ENCODE measurements at regions of chr6 and their contacts with region 1.

Region 1: GRCh38 chr6:37499433-37500293 is at the start of gene CCDC167:
- DNase-seq: peak; percentile 86 to 96 (median 90)
- ATAC-seq: peak; percentile 76
- H3K4me3 ChIP-seq: peak within 1 kb of the TSS; percentile 78
- H3K4me3 Mint-ChIP-seq: peak within 1 kb of the TSS; percentile 90 to 100 (median 98)
- H3K27ac ChIP-seq: peak within 1 kb of the TSS; percentile 91
- H3K27ac Mint-ChIP-seq: peak within 1 kb of the TSS; percentile 84 to 99 (median 95)
- H3K4me1 ChIP-seq: peaks cover 60 to 67% of the 10 kb centered on the region in 2 donors
- H3K4me1 Mint-ChIP-seq: peaks cover 60 to 93% (median 85%) of the 10 kb centered on the region in 7 donors
- H3K27me3 ChIP-seq: no peaks in the 10 kb centered on the region
- H3K27me3 Mint-ChIP-seq: no peaks in the 10 kb centered on the region
- total RNA-seq, gene CCDC167: 13.8 to 55.1 (median 18.0) TPM

Region 2: GRCh38 chr6:37207903-37208456 is 291.7 kb before region 1 on chr6:
- CTCF ChIA-PET with region 1: no interaction called
- POLR2A ChIA-PET with region 1: no interaction called
- intact Hi-C with region 1: no loop called
- DNase-seq: peak; percentile 67 to 85 (median 82)
- ATAC-seq: peak; percentile 87
- H3K4me3 ChIP-seq: no peak overlapping the region
- H3K4me3 Mint-ChIP-seq: peak overlapping the region; percentile 4 to 77 (median 68)
- H3K27ac ChIP-seq: peak overlapping the region; percentile 23
- H3K27ac Mint-ChIP-seq: peak overlapping the region; percentile 72 to 98 (median 91)
- H3K4me1 ChIP-seq: peaks cover 36 to 39% of the 10 kb centered on the region in 2 donors
- H3K4me1 Mint-ChIP-seq: peaks cover 36 to 69% (median 64%) of the 10 kb centered on the region in 7 donors
- H3K27me3 ChIP-seq: no peaks in the 10 kb centered on the region
- H3K27me3 Mint-ChIP-seq: no peaks in the 10 kb centered on the region

Region 3: GRCh38 chr6:37432916-37433656 is 66.6 kb before region 1 on chr6 and contains the start of gene CMTR1:
- CTCF ChIA-PET with region 1: no interaction called
- POLR2A ChIA-PET with region 1: interaction called, 3 read pairs
- intact Hi-C with region 1: loop called (anchors 1 to 5 kb)
- DNase-seq: peak; percentile 94 to 99 (median 95)
- ATAC-seq: peak; percentile 96
- H3K4me3 ChIP-seq: peak within 1 kb of the TSS; percentile 64
- H3K4me3 Mint-ChIP-seq: peak within 1 kb of the TSS; percentile 83 to 96 (median 94)
- H3K27ac ChIP-seq: peak within 1 kb of the TSS; percentile 94
- H3K27ac Mint-ChIP-seq: peak within 1 kb of the TSS; percentile 92 to 97 (median 96)
- H3K4me1 ChIP-seq: peaks cover 12 to 25% of the 10 kb centered on the region in 2 donors
- H3K4me1 Mint-ChIP-seq: peaks cover 24 to 55% (median 47%) of the 10 kb centered on the region in 7 donors
- H3K27me3 ChIP-seq: no peaks in the 10 kb centered on the region
- H3K27me3 Mint-ChIP-seq: peaks cover 2 to 9% (median 8%) of the 10 kb centered on the region in 5 donors
- total RNA-seq, gene CMTR1: 70.0 to 89.4 (median 71.8) TPM

Region 4: GRCh38 chr6:37473397-37474095 is 26.1 kb before region 1 on chr6:
- CTCF ChIA-PET with region 1: no interaction called
- POLR2A ChIA-PET with region 1: no interaction called
- intact Hi-C with region 1: no loop called
- DNase-seq: no peak
- ATAC-seq: no peak
- H3K4me3 ChIP-seq: no peak overlapping the region
- H3K4me3 Mint-ChIP-seq: no peak overlapping the region
- H3K27ac ChIP-seq: no peak overlapping the region
- H3K27ac Mint-ChIP-seq: peak overlapping the region in 3 of 9 donors; percentile 27 to 78 (median 48)
- H3K4me1 ChIP-seq: no peaks in the 10 kb centered on the region
- H3K4me1 Mint-ChIP-seq: peaks cover 0 to 4% (median 0%) of the 10 kb centered on the region in 7 donors
- H3K27me3 ChIP-seq: no peaks in the 10 kb centered on the region
- H3K27me3 Mint-ChIP-seq: no peaks in the 10 kb centered on the region

Region 5: DNA sequence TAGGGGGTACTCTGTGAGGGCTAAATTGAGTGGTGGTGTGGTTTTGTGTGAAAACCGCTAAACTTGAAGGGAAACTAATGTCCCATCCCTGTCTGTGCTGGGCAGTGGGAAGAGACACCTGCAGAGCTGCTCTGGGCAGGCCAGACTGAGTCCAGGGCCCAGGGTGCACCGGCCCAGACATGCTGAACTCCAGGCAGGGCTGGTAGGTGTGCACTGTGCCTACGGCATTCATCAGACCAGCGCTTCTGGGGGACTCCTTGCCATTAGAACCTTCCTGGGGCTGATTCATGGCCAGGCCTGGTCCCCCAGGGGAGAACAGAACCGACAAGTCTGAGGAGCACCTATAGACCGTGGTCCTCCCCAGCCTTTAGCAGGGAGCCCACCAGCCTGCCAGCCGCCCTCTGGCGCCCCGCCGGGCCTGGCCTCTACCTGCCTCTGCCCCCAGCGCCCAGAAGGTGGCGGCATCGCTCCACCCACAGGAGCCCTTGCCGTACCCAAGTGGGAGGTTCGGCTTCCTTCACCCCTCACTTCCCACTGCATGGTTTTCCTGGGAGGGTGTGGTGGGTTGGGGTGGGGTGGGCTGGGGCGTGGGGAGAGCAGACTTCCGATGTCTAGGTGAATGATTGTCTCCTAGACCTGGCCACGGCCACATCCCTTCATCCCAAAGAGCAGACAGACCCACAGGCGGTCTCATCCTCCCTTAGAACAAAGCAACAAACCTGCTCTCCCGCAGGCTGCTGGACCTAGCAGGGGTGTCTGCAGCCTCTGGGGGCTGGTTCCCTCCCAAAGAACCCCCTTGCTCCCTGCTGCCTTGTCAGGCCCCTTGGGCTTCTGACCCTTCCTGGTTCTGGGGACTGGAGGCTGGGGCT is 15.5 kb before region 1 on chr6:
- CTCF ChIA-PET with region 1: interaction called, 4 read pairs
- POLR2A ChIA-PET with region 1: interaction called, 4 read pairs
- intact Hi-C with region 1: loop called in 1 of 2 experiments (anchors 1 kb)
- DNase-seq: peak; percentile 56 to 85 (median 70)
- ATAC-seq: peak; percentile 85
- H3K4me3 ChIP-seq: no peak overlapping the region
- H3K4me3 Mint-ChIP-seq: no peak overlapping the region
- H3K27ac ChIP-seq: no peak overlapping the region
- H3K27ac Mint-ChIP-seq: peak overlapping the region in 2 of 9 donors; percentile 25 to 36
- H3K4me1 ChIP-seq: peaks cover 9 to 16% of the 10 kb centered on the region in 2 donors
- H3K4me1 Mint-ChIP-seq: peaks cover 13 to 35% (median 20%) of the 10 kb centered on the region in 7 donors
- H3K27me3 ChIP-seq: no peaks in the 10 kb centered on the region
- H3K27me3 Mint-ChIP-seq: no peaks in the 10 kb centered on the region

Region 6: DNA sequence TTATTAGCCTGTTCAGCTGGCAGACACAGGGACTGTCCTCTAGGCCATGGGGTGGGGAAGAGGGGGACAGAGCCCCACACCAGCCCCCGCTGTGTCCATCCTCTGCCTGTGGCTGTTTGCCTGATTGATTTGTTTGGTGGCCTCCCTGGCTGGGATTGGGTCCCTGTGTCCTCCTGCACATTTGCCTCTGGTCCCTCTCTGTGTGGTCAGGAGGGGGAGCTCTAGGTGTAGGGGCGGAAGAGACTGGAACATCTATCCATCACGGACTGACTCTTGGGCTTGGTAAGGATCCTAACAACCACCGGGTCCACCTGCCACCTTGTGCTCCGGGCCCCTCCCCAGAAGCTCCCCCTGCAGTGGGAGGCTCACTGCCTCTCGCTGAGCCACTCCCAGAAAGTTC is 38.4 kb after region 1 on chr6:
- CTCF ChIA-PET with region 1: interaction called, 4 read pairs
- POLR2A ChIA-PET with region 1: interaction called, 5 read pairs
- intact Hi-C with region 1: loop called in 1 of 2 experiments (anchors 5 kb)
- DNase-seq: no peak
- ATAC-seq: no peak
- H3K4me3 ChIP-seq: no peak overlapping the region
- H3K4me3 Mint-ChIP-seq: peak overlapping the region in 2 of 10 donors; percentile 19 to 27
- H3K27ac ChIP-seq: no peak overlapping the region
- H3K27ac Mint-ChIP-seq: peak overlapping the region in 5 of 9 donors; percentile 22 to 69 (median 46)
- H3K4me1 ChIP-seq: peaks cover 0 to 18% of the 10 kb centered on the region in 2 donors
- H3K4me1 Mint-ChIP-seq: peaks cover 3 to 36% (median 13%) of the 10 kb centered on the region in 7 donors
- H3K27me3 ChIP-seq: no peaks in the 10 kb centered on the region
- H3K27me3 Mint-ChIP-seq: peaks cover 0 to 48% (median 0%) of the 10 kb centered on the region in 5 donors

Region 7: GRCh38 chr6:37566111-37566949 is 66.7 kb after region 1 on chr6:
- CTCF ChIA-PET with region 1: interaction called, 9 read pairs
- POLR2A ChIA-PET with region 1: interaction called, 6 read pairs
- intact Hi-C with region 1: loop called in 1 of 2 experiments (anchors 1 kb)
- DNase-seq: peak; percentile 45 to 86 (median 70)
- ATAC-seq: peak; percentile 93
- H3K4me3 ChIP-seq: peak overlapping the region; percentile 52
- H3K4me3 Mint-ChIP-seq: peak overlapping the region in 9 of 10 donors; percentile 37 to 80 (median 63)
- H3K27ac ChIP-seq: no peak overlapping the region
- H3K27ac Mint-ChIP-seq: peak overlapping the region in 2 of 9 donors; percentile 8 to 12
- H3K4me1 ChIP-seq: peaks cover 0 to 4% of the 10 kb centered on the region in 2 donors
- H3K4me1 Mint-ChIP-seq: peaks cover 6 to 21% (median 12%) of the 10 kb centered on the region in 7 donors
- H3K27me3 ChIP-seq: no peaks in the 10 kb centered on the region
- H3K27me3 Mint-ChIP-seq: peaks cover 3 to 28% (median 11%) of the 10 kb centered on the region in 5 donors

Region 8: GRCh38 chr6:37576336-37576813 is 76.7 kb after region 1 on chr6:
- CTCF ChIA-PET with region 1: no interaction called
- POLR2A ChIA-PET with region 1: no interaction called
- intact Hi-C with region 1: no loop called
- DNase-seq: no peak
- ATAC-seq: no peak
- H3K4me3 ChIP-seq: no peak overlapping the region
- H3K4me3 Mint-ChIP-seq: no peak overlapping the region
- H3K27ac ChIP-seq: no peak overlapping the region
- H3K27ac Mint-ChIP-seq: no peak overlapping the region
- H3K4me1 ChIP-seq: no peaks in the 10 kb centered on the region
- H3K4me1 Mint-ChIP-seq: no peaks in the 10 kb centered on the region
- H3K27me3 ChIP-seq: no peaks in the 10 kb centered on the region
- H3K27me3 Mint-ChIP-seq: peaks cover 0 to 8% (median 3%) of the 10 kb centered on the region in 5 donors

Region 9: GRCh38 chr6:38639498-38640215 is 1140.0 kb after region 1 on chr6 and contains the start of gene BTBD9:
- CTCF ChIA-PET with region 1: no interaction called
- POLR2A ChIA-PET with region 1: no interaction called
- intact Hi-C with region 1: loop called in 1 of 2 experiments (anchors 5 kb)
- DNase-seq: peak; percentile 83 to 92 (median 90)
- ATAC-seq: peak; percentile 87
- H3K4me3 ChIP-seq: peak within 1 kb of the TSS; percentile 90
- H3K4me3 Mint-ChIP-seq: peak within 1 kb of the TSS; percentile 74 to 94 (median 90)
- H3K27ac ChIP-seq: peak within 1 kb of the TSS; percentile 94
- H3K27ac Mint-ChIP-seq: peak within 1 kb of the TSS; percentile 88 to 96 (median 91)
- H3K4me1 ChIP-seq: peaks cover 16 to 22% of the 10 kb centered on the region in 2 donors
- H3K4me1 Mint-ChIP-seq: peaks cover 40 to 65% (median 57%) of the 10 kb centered on the region in 7 donors
- H3K27me3 ChIP-seq: no peaks in the 10 kb centered on the region
- H3K27me3 Mint-ChIP-seq: no peaks in the 10 kb centered on the region
- total RNA-seq, gene BTBD9: 20.6 to 58.8 (median 43.6) TPM

Measured in naive thymus-derived CD4-positive, alpha-beta T cell (primary cell).